ENCODE measurements at regions of chr17 and their contacts with region 1.

Region 1: GRCh38 chr17:409848-410545 is 57.4 kb upstream of the RPH3AL start:
- DNase-seq: peak; percentile 99 to 100
- ATAC-seq: peak; percentile 95 to 98 (median 96)
- H3K4me3 ChIP-seq: peak overlapping the region; percentile 97
- H3K27ac ChIP-seq: peak overlapping the region; percentile 71
- H3K4me1 ChIP-seq: peaks cover 12% of the 10 kb centered on the region
- H3K27me3 ChIP-seq: no peaks in the 10 kb centered on the region
- CTCF ChIP-seq: no peak

Region 2: DNA sequence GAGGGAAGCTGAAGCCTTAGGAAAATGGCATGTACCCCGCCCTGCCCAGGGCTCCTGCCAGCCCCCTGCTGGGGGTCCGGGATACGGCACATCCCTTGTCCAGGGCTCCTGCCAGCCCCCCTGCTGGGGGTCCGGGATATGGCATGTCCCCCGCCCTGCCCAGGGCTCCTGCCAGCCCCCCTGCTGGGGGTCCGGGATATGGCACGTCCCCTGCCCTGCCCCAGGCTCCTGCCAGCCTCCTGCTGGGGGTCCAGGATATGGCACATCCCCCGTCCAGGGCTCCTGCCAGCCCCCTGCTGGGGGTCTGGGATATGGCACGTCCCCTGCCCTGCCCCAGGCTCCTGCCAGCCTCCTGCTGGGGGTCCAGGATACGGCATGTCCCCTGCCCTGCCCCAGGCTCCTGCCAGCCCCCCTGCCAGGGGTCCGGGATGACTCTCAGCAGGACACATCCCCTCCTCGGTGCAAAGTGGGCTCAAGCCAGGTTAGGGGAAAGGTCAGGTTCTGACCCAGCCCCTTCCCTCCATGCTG is 100.6 kb before region 1 on chr17:
- intact Hi-C with region 1: no loop called
- DNase-seq: peak in 1 of 2 donors; percentile 49
- ATAC-seq: no peak
- H3K4me3 ChIP-seq: no peak overlapping the region
- H3K27ac ChIP-seq: no peak overlapping the region
- H3K4me1 ChIP-seq: no peaks in the 10 kb centered on the region
- H3K27me3 ChIP-seq: no peaks in the 10 kb centered on the region
- CTCF ChIP-seq: peak; percentile 36

Region 3: DNA sequence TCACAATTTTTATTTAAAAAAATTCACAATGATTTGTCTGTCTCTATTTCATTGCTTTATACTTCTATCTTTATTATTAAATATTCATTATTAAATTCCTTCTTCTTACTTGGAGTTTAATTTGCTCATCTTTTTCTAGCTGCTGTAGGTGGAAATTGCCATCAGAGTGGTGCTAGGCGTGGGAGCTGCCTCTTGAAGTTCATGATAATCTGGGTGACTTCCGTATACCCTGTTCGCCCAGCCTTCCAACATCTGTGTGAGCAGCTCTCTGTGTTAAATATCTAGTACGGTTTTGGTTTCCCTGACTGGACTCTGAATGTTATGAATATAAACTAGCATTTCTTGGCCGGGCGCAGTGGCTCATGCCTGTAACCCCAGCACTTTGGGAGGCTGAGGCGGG is 26.6 kb after region 1 on chr17:
- intact Hi-C with region 1: no loop called
- DNase-seq: no peak
- ATAC-seq: no peak
- H3K4me3 ChIP-seq: no peak overlapping the region
- H3K27ac ChIP-seq: no peak overlapping the region
- H3K4me1 ChIP-seq: no peaks in the 10 kb centered on the region
- H3K27me3 ChIP-seq: no peaks in the 10 kb centered on the region
- CTCF ChIP-seq: no peak

Region 4: GRCh38 chr17:497241-498034 is 87.4 kb after region 1 on chr17:
- intact Hi-C with region 1: no loop called
- DNase-seq: no peak
- ATAC-seq: no peak
- H3K4me3 ChIP-seq: no peak overlapping the region
- H3K27ac ChIP-seq: no peak overlapping the region
- H3K4me1 ChIP-seq: no peaks in the 10 kb centered on the region
- H3K27me3 ChIP-seq: no peaks in the 10 kb centered on the region
- CTCF ChIP-seq: no peak

Region 5: DNA sequence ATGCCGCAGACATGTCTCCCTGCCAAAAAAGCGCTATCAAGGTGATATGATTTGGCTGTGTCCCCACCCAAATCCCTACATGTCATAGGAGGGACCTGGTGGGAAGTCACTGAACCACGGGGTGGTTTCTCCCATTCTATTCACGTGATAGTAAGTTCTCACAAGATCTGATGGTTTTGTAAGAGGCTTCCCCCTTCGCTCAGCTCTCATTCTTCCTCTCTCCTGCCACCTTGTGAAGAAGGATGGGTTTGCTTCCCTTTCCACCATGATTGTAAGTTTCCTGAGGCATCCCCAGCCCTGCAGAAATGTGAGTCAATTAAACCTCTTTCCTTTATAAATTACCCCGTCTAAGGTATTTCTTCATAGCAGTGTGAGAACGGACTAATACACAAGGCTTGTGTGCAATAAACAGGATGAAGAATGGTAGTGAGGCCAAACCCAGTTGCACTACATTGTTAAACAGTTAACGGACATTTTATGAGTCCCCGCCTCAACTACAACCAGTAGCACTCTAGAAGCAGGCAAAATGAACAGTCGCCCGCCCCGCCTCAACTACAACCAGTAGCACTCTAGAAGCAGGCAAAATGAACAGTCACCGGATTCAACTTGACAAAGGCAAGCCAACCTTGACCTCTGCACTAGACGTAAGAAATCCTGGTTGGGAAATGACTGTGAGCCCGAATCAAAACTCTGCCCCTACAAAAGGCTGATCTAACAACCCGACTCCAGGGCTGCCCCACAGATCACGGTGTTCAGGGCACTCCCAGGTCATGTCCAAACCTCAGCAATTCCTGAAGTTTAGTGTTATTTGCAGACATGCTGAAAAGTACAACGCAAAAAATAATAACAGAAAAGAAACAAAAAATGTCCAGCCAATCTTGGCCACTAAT is 278.3 kb after region 1 on chr17:
- intact Hi-C with region 1: no loop called
- DNase-seq: no peak
- ATAC-seq: no peak
- H3K4me3 ChIP-seq: no peak overlapping the region
- H3K27ac ChIP-seq: no peak overlapping the region
- H3K4me1 ChIP-seq: peaks cover 16% of the 10 kb centered on the region
- H3K27me3 ChIP-seq: no peaks in the 10 kb centered on the region
- CTCF ChIP-seq: no peak

Region 6: DNA sequence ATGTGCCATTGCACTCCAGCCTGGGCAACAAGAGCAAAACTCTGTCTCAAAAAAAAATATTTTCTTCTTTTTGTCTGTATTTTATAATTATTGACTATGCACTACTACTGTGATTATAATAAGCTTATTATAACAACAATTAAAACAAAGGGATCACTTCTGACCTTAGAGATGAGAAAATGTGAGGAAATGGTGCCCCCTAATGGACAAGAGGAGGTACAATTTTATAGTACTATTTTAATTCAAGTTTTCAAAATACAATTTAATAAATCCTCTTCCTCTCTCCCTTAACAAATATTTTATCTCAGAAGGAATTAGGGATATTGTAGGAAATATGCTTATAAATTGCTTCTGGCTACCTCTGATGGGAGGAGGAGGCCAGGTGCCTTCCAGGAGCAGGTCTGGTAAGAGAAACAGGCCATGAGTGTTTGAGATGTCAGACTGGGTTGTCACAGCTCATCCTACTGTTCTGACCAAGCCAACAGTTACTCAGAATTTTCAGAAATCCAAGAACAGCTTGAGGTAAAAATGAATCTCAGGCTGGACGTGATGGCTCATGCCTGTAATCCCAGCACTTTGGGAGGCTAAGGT is 290.6 kb after region 1 on chr17:
- intact Hi-C with region 1: loop called (anchors 1 to 2 kb)
- DNase-seq: no peak
- ATAC-seq: peak in 2 of 4 donors; percentile 53 to 71
- H3K4me3 ChIP-seq: no peak overlapping the region
- H3K27ac ChIP-seq: no peak overlapping the region
- H3K4me1 ChIP-seq: peaks cover 4% of the 10 kb centered on the region
- H3K27me3 ChIP-seq: no peaks in the 10 kb centered on the region
- CTCF ChIP-seq: peak; percentile 71

Region 7: DNA sequence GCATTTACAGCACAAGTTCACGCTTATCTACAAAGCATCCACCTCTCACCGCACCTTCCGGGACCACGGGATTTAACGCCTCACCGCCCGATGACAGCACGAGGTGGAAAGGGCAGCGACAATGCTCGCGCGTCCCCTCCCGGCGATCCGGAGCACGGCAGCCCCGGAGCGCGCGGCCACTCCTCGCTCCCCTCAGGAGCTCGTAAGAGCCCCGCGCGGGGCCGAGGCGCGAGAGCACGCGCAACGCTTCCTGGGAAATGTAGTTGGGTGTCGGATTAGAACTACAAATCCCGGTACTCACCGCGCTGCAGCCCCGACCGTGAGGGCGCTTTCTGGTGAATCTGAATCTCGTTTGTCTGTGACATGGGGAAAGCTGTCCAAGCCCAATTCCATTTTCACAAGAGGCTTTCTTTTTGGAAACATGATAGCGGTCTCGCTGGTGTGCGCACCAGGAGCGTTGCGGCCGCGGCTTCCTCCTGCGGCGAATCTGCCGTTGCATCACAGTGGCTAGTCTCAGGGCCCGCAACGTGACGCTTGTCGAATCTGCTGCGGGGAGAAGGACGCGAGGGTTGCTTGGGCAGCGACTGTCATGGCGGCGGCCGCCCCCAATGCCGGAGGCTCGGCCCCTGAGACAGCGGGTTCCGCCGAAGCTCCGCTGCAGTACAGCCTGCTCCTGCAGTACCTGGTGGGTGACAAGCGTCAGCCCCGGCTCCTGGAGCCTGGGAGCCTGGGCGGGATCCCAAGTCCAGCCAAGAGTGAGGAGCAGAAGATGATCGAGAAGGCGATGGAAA is 586.8 kb after region 1 on chr17 and contains the start of gene TIMM22:
- intact Hi-C with region 1: loop called in 1 of 2 experiments (anchors 5 kb)
- DNase-seq: peak; percentile 95 to 97
- ATAC-seq: peak; percentile 92 to 94 (median 94)
- H3K4me3 ChIP-seq: peak within 1 kb of the TSS; percentile 83
- H3K27ac ChIP-seq: peak within 1 kb of the TSS; percentile 89
- H3K4me1 ChIP-seq: peaks cover 46% of the 10 kb centered on the region
- H3K27me3 ChIP-seq: no peaks in the 10 kb centered on the region
- CTCF ChIP-seq: peak; percentile 93
- total RNA-seq, gene TIMM22: 8.0 to 18.0 (median 12.4) TPM

Measured in psoas muscle (tissue), 8 donors.